ENCODE measurements at regions of chr6 and their contacts with region 1.

Region 1: DNA sequence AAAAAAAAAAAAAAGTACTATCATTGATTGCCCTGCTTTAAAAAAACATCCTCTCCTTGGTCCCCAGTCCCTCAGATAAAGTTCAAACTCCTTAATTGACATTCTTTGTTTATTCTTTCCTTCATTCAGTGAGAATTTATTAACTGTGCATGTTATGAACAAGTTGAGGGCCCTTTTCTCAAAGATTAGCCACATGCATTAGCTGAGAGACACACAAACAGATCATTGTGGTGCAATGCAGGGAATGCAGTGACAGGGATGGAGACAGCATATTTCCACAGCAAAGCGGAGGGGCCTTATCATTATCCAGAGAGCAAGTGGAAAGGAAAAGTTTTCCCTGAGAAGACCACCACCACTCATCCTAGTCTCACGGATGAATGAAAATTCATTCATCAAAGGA is 21.9 kb upstream of the IPCEF1 start:
- DNase-seq: no peak
- ATAC-seq: peak; percentile 34; the same call in 2 of the 3 replicates
- H3K4me3 ChIP-seq: no peak overlapping the region
- H3K27ac ChIP-seq: no peak overlapping the region
- H3K4me1 ChIP-seq: no peaks in the 10 kb centered on the region
- H3K27me3 ChIP-seq: no peaks in the 10 kb centered on the region
- CTCF ChIP-seq: no peak
- EP300 ChIP-seq: no peak
- POLR2A ChIP-seq: no peak
- RAD21 ChIP-seq: no peak

Region 2: GRCh38 chr6:154329350-154330170 is 49.0 kb before region 1 on chr6:
- CTCF ChIA-PET with region 1: no interaction called
- POLR2A ChIA-PET with region 1: no interaction called
- in situ Hi-C with region 1: no loop called
- intact Hi-C with region 1: loop called (anchors 1 kb)
- DNase-seq: no peak
- ATAC-seq: peak; percentile 62
- H3K4me3 ChIP-seq: no peak overlapping the region
- H3K27ac ChIP-seq: no peak overlapping the region
- H3K4me1 ChIP-seq: peaks cover 9% of the 10 kb centered on the region
- H3K27me3 ChIP-seq: 0 out of 5 replicates have a peak, but pooled peaks cover 0 to 4% of the 10 kb centered on the region in 2 experiments
- CTCF ChIP-seq: no peak
- EP300 ChIP-seq: no peak
- POLR2A ChIP-seq: no peak
- RAD21 ChIP-seq: no peak

Region 3: DNA sequence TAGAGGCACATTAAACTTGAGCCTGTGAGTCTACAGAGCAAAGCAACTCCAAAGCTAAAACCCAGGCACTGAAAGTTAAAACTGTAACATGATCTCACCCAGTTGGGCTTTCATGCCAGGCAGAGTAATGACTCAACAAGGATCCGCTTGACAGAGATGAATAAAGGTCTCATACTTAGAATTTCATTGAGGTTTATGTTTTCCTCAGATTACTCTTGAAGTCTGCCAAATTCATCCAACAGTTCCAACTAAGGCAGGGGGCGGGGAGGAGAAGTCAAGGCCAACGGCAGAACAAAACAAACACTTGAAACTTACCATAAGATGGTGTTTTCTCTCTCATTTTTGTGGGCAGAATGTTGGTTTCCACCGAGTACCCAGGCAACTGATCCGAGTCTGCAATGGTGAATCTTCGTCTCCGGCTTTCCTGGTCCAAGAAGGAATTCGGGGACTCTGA is 32.1 kb after region 1 on chr6:
- CTCF ChIA-PET with region 1: no interaction called
- POLR2A ChIA-PET with region 1: no interaction called
- in situ Hi-C with region 1: no loop called
- intact Hi-C with region 1: no loop called
- DNase-seq: peak; percentile 48
- ATAC-seq: no peak
- H3K4me3 ChIP-seq: no peak overlapping the region
- H3K27ac ChIP-seq: no peak overlapping the region
- H3K4me1 ChIP-seq: peaks cover 33% of the 10 kb centered on the region
- H3K27me3 ChIP-seq: no peaks in the 10 kb centered on the region
- CTCF ChIP-seq: no peak
- EP300 ChIP-seq: no peak
- POLR2A ChIP-seq: no peak
- RAD21 ChIP-seq: no peak

Region 4: DNA sequence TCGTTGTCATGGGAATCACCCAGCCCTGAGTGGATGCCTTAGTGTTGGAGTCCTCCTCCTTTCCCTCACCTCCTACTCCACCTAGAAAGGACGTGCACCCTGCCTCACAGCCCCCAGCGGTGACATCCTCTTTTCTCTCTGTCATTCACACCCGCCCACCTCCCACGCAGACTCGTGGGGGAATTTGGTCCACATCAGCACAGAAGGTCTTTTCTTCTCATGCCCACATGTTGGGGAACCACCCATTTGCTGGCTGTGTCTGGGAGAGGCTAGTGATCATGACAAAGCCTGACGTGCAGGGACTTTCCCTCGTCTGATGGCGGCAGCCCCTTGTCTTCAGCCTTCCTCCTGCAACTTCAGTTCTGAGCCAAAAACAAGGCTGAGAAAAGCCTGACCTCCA is 227.9 kb after region 1 on chr6:
- CTCF ChIA-PET with region 1: no interaction called
- POLR2A ChIA-PET with region 1: no interaction called
- in situ Hi-C with region 1: no loop called
- intact Hi-C with region 1: no loop called
- DNase-seq: no peak
- ATAC-seq: no peak
- H3K4me3 ChIP-seq: no peak overlapping the region
- H3K27ac ChIP-seq: no peak overlapping the region
- H3K4me1 ChIP-seq: no peaks in the 10 kb centered on the region
- H3K27me3 ChIP-seq: no peaks in the 10 kb centered on the region
- CTCF ChIP-seq: no peak
- EP300 ChIP-seq: no peak
- POLR2A ChIP-seq: no peak
- RAD21 ChIP-seq: no peak

Region 5: DNA sequence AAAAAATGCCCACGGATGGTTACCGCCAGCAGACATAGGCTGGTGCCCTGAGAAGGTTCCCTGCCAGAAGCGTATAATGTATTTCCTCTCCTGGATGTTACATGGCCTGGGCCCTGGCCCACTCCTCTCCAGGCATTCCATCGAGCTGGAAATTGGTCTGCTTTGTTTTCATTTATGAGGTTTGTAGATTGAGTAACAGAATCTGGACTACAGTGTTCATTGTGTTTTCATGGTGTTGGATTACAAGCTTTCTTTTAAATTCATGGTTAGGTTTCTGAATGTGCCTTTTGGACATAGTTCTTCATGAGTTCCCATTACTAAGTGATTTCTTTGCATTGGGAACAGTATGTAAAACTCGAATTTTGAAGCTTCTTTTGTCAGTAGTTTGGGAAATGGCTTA is 623.0 kb after region 1 on chr6:
- CTCF ChIA-PET with region 1: no interaction called
- POLR2A ChIA-PET with region 1: no interaction called
- in situ Hi-C with region 1: no loop called
- intact Hi-C with region 1: no loop called
- DNase-seq: peak; percentile 36
- ATAC-seq: peak; percentile 32
- H3K4me3 ChIP-seq: no peak overlapping the region
- H3K27ac ChIP-seq: no peak overlapping the region
- H3K4me1 ChIP-seq: peaks cover 56% of the 10 kb centered on the region
- H3K27me3 ChIP-seq: peaks cover 0 to 9% of the 10 kb centered on the region in 2 experiments; a peak in 2 of 5 replicates
- CTCF ChIP-seq: no peak
- EP300 ChIP-seq: no peak
- POLR2A ChIP-seq: no peak
- RAD21 ChIP-seq: no peak

Measured in HepG2 (cell line).